Activated CD4-positive, alpha-beta T cell treated with anti-CD3 and anti-CD28 coated beads, Interleukin-2, amount 10 ng/mL, durations not matched to agents 24 days and 14 days (primary cell): ENCODE measurements at regions of chr12 and their contacts with region 1.

Region 1: DNA sequence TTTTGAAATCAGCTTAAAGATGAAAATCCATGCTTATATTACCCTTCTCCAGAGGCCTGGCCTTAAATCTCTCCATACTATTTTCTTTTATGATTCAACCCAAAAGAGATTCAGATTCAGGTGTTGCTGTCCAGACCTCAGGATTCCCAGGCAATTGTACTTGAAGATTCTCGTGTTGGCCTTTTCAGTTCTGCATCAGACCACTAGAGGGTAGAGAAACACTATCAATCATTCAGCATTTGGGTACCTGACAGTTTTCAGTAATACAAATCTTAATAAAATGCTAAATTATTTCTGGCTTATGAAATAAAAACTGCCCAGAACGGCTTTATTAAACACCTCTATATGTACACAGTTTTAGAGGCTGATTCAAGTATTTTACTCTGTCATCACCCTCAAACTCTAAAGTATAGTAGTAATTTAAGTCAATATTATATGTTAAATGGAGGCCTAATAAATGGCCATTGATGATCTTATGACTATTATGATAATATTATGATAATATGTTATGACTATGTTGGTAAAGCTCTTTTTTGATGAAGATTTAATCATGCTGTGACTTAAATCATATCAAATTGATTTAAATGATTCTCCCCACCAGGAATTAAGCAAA is 301.1 kb downstream of the DUSP6 start:
- DNase-seq: peak; percentile 82
- H3K4me3 Mint-ChIP-seq: no peak overlapping the region
- H3K27ac Mint-ChIP-seq: no peak overlapping the region
- H3K4me1 Mint-ChIP-seq: peaks cover 24% of the 10 kb centered on the region
- H3K27me3 Mint-ChIP-seq: no peaks in the 10 kb centered on the region

Region 2: DNA sequence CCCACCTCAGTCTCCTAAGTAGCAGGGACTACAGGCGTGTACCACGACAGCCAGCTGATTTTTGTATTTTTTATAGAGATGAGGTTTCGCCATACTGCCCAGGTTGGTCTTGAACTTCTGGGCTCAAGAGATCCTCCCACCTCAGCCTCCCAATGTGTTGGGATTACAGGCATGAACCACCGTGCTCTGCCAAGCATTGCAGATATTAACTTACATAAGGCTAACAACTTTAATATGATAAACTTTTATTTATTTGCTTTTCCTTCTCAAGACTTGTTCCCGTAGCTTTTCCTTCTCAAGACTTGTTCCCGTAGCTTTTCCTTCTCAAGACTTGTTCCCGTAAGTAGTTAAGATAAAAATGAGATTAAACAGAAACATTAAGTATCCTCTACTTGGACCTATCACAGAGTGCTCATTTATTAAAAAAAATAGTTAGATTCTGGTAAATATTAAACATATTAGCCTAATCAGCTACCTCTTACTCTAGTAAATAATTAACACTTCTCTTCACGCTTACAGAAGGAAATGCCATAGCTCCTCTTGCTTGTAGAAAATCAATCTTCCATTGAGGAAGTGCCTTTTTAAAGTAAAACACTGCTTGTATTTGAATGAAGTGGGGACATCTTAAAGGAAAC is 313.2 kb before region 1 on chr12:
- intact Hi-C with region 1: no loop called
- DNase-seq: no peak
- H3K4me3 Mint-ChIP-seq: no peak overlapping the region
- H3K27ac Mint-ChIP-seq: no peak overlapping the region
- H3K4me1 Mint-ChIP-seq: no peaks in the 10 kb centered on the region
- H3K27me3 Mint-ChIP-seq: no peaks in the 10 kb centered on the region

Region 3: GRCh38 chr12:88793096-88793495 is 258.1 kb before region 1 on chr12:
- intact Hi-C with region 1: no loop called
- DNase-seq: no peak
- H3K4me3 Mint-ChIP-seq: no peak overlapping the region
- H3K27ac Mint-ChIP-seq: no peak overlapping the region
- H3K4me1 Mint-ChIP-seq: no peaks in the 10 kb centered on the region
- H3K27me3 Mint-ChIP-seq: no peaks in the 10 kb centered on the region

Region 4: GRCh38 chr12:89040146-89040964 is 10.8 kb before region 1 on chr12:
- intact Hi-C with region 1: no loop called
- DNase-seq: peak; percentile 94
- H3K4me3 Mint-ChIP-seq: peak overlapping the region; percentile 72
- H3K27ac Mint-ChIP-seq: peak overlapping the region; percentile 93
- H3K4me1 Mint-ChIP-seq: peaks cover 58% of the 10 kb centered on the region
- H3K27me3 Mint-ChIP-seq: no peaks in the 10 kb centered on the region

Region 5: GRCh38 chr12:89461649-89462612 is 410.8 kb after region 1 on chr12:
- intact Hi-C with region 1: loop called (anchors 1 kb)
- DNase-seq: peak; percentile 65
- H3K4me3 Mint-ChIP-seq: peak overlapping the region; percentile 77
- H3K27ac Mint-ChIP-seq: peak overlapping the region; percentile 64
- H3K4me1 Mint-ChIP-seq: peaks cover 39% of the 10 kb centered on the region
- H3K27me3 Mint-ChIP-seq: no peaks in the 10 kb centered on the region